ENCODE measurements at regions of chr18 and their contacts with region 1.

Region 1: GRCh38 chr18:44238454-44238853 is 442.2 kb upstream of the SETBP1 start:
- DNase-seq: no peak
- ATAC-seq: no peak
- H3K4me3 ChIP-seq: no peak overlapping the region
- H3K27ac ChIP-seq: no peak overlapping the region
- H3K4me1 ChIP-seq: no peaks in the 10 kb centered on the region
- H3K27me3 ChIP-seq: no peaks in the 10 kb centered on the region
- CTCF ChIP-seq: no peak

Region 2: GRCh38 chr18:45793306-45793965 is 1555.0 kb after region 1 on chr18:
- intact Hi-C with region 1: loop called in 1 of 10 experiments (anchors 5 kb)
- DNase-seq: no peak
- ATAC-seq: no peak
- H3K4me3 ChIP-seq: no peak overlapping the region
- H3K27ac ChIP-seq: no peak overlapping the region
- H3K4me1 ChIP-seq: no peaks in the 10 kb centered on the region
- H3K27me3 ChIP-seq: no peaks in the 10 kb centered on the region
- CTCF ChIP-seq: no peak

Measured in heart right ventricle (tissue), 16 donors.